Esophagus muscularis mucosa (tissue), 4 donors: ENCODE measurements at regions of chr7 and their contacts with region 1.

Region 1: GRCh38 chr7:32942786-32943653 is 14.2 kb upstream of the FKBP9 start:
- DNase-seq: no peak
- H3K4me3 ChIP-seq: peak overlapping the region; percentile 68 to 97 (median 90)
- H3K27ac ChIP-seq: peak overlapping the region; percentile 91 to 98 (median 94)
- H3K4me1 ChIP-seq: peaks cover 24 to 40% (median 38%) of the 10 kb centered on the region in 4 donors
- H3K27me3 ChIP-seq: no peaks in the 10 kb centered on the region
- CTCF ChIP-seq: peak; percentile 74 to 75 (median 74)
- EP300 ChIP-seq: no peak
- POLR2A ChIP-seq: no peak

Region 2: DNA sequence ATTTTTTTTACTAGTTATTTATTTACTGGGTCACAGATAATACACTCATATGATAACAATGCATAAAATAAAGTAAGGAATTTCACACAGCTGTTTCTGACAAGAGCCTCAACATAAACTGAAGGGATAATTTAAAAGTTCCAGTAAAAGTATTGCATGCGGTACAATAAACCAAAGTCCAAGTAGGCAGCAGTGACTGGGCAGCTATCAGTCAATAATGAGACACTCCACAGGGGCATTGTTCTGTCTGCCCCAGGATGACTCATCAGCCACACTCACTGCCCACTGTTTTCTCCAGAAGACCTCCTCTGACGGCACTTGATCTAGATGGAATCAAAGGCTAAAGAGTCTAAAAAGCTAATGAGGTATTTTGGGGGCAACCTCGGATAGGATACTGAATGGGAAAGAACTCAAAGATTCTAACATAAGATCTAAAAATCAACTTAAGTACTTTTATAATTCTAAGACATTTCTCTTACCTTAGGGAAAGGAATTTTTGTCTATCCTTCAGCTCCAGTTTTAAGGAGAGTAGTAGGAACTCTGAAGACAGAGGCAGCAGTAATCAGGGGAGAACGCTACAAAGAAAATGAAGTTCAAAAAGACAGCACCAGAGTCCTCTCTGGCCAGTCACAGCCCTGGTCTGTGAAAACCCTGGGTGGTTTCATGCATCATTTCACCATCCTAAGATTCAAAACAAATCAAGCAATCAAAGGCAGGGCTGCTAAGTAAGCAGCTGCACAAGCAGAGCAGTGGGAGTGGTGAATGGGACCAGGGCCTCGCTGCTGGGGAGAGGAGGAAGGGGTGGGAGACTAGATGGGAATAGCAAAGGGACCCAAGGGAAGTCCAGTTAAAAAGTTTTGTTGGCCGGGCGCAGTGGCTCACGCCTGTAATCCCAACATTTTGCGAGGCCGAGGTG is 272.7 kb before region 1 on chr7:
- intact Hi-C with region 1: no loop called
- DNase-seq: no peak
- H3K4me3 ChIP-seq: no peak overlapping the region
- H3K27ac ChIP-seq: no peak overlapping the region
- H3K4me1 ChIP-seq: peaks cover 0 to 3% (median 0%) of the 10 kb centered on the region in 4 donors
- H3K27me3 ChIP-seq: no peaks in the 10 kb centered on the region
- CTCF ChIP-seq: no peak
- EP300 ChIP-seq: no peak
- POLR2A ChIP-seq: no peak

Region 3: GRCh38 chr7:32803406-32804141 is 139.4 kb before region 1 on chr7:
- intact Hi-C with region 1: loop called (anchors 2 kb)
- DNase-seq: no peak
- H3K4me3 ChIP-seq: no peak overlapping the region
- H3K27ac ChIP-seq: no peak overlapping the region
- H3K4me1 ChIP-seq: peaks cover 0 to 5% (median 2%) of the 10 kb centered on the region in 4 donors
- H3K27me3 ChIP-seq: no peaks in the 10 kb centered on the region
- CTCF ChIP-seq: no peak
- EP300 ChIP-seq: no peak
- POLR2A ChIP-seq: no peak

Region 4: GRCh38 chr7:32846701-32847100 is 96.3 kb before region 1 on chr7:
- intact Hi-C with region 1: loop called (anchors 2 kb)
- DNase-seq: peak; percentile 96
- H3K4me3 ChIP-seq: peak overlapping the region in 1 of 4 donors; percentile 7
- H3K27ac ChIP-seq: no peak overlapping the region
- H3K4me1 ChIP-seq: peaks cover 4 to 9% (median 7%) of the 10 kb centered on the region in 4 donors
- H3K27me3 ChIP-seq: no peaks in the 10 kb centered on the region
- CTCF ChIP-seq: peak; percentile 89 to 93 (median 92)
- EP300 ChIP-seq: no peak
- POLR2A ChIP-seq: no peak

Region 5: DNA sequence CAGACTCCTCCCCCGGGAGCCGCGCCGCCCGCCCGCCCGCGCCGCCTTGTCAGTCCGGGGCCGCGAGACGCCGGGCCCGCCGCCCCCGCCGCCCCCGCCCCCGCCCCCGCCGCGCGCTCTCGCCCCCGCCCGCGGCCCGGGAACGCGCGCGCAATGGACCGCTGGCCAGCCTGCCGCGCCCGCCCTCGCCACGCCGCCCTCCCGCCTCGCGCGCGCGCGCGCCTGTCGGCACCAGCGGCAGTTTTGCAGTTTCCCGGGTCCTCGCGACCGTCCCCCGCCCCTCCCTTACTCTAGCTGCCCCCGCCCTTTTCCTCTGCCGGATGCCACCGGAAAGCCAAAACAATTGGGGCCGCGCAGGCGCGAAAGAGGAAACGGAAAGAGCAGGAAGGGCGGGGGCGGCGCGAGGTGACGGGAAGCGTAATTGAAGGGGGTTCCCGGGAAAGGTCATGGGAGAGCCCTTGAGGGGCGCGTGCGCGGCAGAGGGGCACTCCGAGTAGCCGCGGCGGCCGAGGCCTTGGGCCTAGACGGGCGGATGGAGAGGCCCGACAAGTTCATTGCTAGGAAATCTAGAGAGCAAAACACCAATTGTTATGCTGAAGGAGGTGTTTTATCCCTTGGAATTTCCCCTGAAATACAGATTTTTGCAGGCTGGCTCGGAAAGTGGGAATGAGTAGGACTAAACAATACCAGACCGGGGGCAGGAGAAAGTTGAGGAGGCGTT is 51.1 kb before region 1 on chr7:
- intact Hi-C with region 1: loop called (anchors 1 kb)
- DNase-seq: peak; percentile 99
- H3K4me3 ChIP-seq: peak overlapping the region; percentile 95 to 99 (median 98)
- H3K27ac ChIP-seq: peak overlapping the region; percentile 99 to 100 (median 100)
- H3K4me1 ChIP-seq: peaks cover 38 to 63% (median 57%) of the 10 kb centered on the region in 4 donors
- H3K27me3 ChIP-seq: no peaks in the 10 kb centered on the region
- CTCF ChIP-seq: no peak
- EP300 ChIP-seq: no peak
- POLR2A ChIP-seq: peak; percentile 74

Region 6: GRCh38 chr7:32957326-32958045 is 14.5 kb after region 1 on chr7 and contains the start of gene FKBP9:
- intact Hi-C with region 1: loop called (anchors 1 kb)
- DNase-seq: peak; percentile 95
- H3K4me3 ChIP-seq: peak within 1 kb of the TSS; percentile 79 to 97 (median 96)
- H3K27ac ChIP-seq: peak within 1 kb of the TSS; percentile 91 to 96 (median 92)
- H3K4me1 ChIP-seq: peaks cover 17 to 30% (median 26%) of the 10 kb centered on the region in 4 donors
- H3K27me3 ChIP-seq: no peaks in the 10 kb centered on the region
- CTCF ChIP-seq: peak in 1 of 3 experiments; percentile 10
- EP300 ChIP-seq: no peak
- POLR2A ChIP-seq: peak; percentile 21
- total RNA-seq, gene FKBP9: 119 to 123 (median 122) TPM

Region 7: DNA sequence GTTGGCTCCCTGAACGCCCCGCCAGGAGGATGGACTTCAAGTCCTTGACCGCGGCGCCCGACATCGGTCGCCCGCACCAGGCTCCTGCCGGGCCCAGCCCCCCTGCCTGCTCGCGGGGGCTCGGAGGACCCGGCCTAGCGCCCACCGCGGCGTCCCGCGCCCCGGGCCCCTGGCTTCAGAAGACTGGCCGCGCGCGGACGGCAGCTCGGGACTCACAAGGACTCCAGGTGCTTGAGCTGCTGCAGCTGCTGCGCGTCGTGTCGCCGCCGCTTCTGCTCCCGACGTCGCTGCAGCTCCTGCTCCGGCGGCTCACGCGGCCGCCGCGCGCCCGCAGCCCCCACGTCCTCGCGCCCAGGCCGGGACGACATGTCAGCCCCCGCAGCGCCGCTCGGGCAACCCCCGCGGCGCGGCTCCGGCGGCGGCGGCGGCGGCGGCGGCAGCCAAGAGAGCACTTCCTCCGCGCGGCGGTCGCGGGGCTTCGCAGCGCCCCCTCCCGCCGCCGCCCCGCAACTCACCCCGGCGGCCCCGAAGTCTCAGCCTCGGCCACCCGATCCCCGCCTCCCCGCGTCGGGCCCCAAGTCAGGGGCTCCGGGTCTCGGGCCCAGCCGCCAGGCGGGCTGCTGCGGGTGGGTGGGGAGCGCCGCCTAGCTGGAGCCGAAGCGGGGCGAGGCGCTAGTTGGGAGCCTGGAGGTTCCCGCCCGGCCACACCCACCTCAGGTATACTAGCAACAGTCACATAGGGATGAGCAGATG is 166.2 kb after region 1 on chr7 and contains the start of gene RP9:
- intact Hi-C with region 1: loop called (anchors 5 kb)
- DNase-seq: no peak
- H3K4me3 ChIP-seq: peak within 1 kb of the TSS; percentile 97 to 99 (median 98)
- H3K27ac ChIP-seq: peak within 1 kb of the TSS; percentile 80 to 89 (median 85)
- H3K4me1 ChIP-seq: peaks cover 36 to 44% (median 42%) of the 10 kb centered on the region in 4 donors
- H3K27me3 ChIP-seq: no peaks in the 10 kb centered on the region
- CTCF ChIP-seq: peak; percentile 63 to 75 (median 67)
- EP300 ChIP-seq: no peak
- POLR2A ChIP-seq: no peak
- total RNA-seq, gene RP9: 7.6 to 11.5 (median 10.1) TPM